Left colon (tissue), 2 donors: ENCODE measurements at regions of chr6 and their contacts with region 1.

Region 1: DNA sequence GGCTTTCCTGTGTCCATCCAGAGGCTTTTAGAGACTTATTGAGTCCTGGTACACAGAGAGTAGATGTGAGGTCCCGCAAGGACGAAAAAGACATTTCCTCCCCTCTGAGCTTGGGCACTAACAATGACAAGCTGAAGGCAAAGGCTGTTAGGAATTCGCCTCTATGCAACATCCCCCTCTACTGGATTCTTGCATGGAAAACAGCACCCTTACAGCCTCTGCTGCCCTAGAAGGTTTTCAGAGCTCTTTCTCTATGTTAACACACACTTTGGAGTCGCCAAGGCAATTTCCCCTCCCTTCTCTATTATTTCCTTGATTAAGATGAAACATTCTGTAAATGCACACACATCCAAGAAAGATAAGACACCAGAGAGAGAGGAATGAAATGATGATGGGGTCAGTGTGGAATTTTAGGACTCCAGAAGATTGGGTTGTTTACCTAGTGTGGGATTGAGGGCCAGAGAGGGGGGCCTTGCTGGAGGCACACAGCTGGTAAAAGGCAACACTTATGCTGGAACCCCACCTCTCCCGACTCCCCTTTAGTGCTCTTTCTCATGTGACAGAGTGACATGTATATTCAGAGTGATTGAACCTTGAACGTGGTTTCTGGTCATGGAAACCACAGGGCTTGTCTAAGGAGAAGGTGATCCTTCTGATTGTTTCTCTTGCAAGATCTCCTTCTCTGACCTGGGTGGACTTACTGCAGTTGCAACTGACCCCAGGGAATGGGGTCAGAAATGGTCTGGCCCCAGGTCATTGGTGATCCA is 300.7 kb downstream of the CLIC5 start:
- DNase-seq: peak; percentile 22 to 44
- ATAC-seq: peak; percentile 96

Region 2: GRCh38 chr6:44489910-44490604 is 1224.9 kb before region 1 on chr6:
- intact Hi-C with region 1: loop called in 1 of 2 experiments (anchors 10 kb)
- DNase-seq: no peak
- ATAC-seq: no peak

Region 3: DNA sequence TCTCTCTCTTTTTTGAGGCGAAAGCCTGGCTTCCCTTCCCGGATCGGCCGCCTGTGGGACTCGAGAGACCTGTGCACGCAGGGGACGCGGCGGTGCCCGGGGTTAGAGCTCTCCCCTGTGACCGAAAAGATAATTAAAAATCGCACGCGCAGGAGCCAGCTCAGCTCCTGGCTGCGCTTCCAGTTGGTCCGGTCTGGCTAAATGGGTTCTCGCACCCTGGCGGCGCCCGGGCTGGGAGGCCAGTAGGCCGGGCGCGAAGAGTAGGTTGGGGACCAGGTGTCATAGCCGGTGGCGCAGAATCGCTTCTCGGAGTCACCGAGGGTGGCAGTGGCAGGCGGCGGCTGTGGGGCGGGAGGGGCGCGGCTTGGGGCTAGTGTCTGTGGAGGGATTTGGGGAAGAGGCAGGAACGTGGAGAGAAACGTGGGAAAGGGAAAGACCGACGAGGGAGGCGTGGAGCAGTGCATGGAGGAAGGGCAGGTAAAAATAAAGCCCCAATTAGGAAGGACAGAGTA is 295.3 kb before region 1 on chr6:
- intact Hi-C with region 1: loop called in 1 of 2 experiments (anchors 10 kb)
- DNase-seq: peak; percentile 66 to 70
- ATAC-seq: peak; percentile 60

Region 4: GRCh38 chr6:45586216-45587171 is 128.4 kb before region 1 on chr6:
- intact Hi-C with region 1: loop called in 1 of 2 experiments (anchors 10 kb)
- DNase-seq: no peak
- ATAC-seq: no peak